A549 (cell line): ENCODE measurements at regions of chr18 and their contacts with region 1.

Region 1: GRCh38 chr18:13800505-13801259 is 23.3 kb upstream of the MC5R start:
- DNase-seq: peak; percentile 58 to 73
- ATAC-seq: peak; percentile 100
- H3K4me3 ChIP-seq: peak overlapping the region; percentile 39
- H3K27ac ChIP-seq: peak overlapping the region in 1 of 2 experiments; percentile 66; a peak in 2 of 6 replicates
- H3K4me1 ChIP-seq: peaks cover 6% of the 10 kb centered on the region; the same call in 1 of the 3 replicates
- CTCF ChIP-seq: peak; percentile 63
- EP300 ChIP-seq: no peak
- POLR2A ChIP-seq: peak; percentile 17; the same call in 1 of the 2 replicates
- RAD21 ChIP-seq: peak; percentile 54 to 80

Region 2: DNA sequence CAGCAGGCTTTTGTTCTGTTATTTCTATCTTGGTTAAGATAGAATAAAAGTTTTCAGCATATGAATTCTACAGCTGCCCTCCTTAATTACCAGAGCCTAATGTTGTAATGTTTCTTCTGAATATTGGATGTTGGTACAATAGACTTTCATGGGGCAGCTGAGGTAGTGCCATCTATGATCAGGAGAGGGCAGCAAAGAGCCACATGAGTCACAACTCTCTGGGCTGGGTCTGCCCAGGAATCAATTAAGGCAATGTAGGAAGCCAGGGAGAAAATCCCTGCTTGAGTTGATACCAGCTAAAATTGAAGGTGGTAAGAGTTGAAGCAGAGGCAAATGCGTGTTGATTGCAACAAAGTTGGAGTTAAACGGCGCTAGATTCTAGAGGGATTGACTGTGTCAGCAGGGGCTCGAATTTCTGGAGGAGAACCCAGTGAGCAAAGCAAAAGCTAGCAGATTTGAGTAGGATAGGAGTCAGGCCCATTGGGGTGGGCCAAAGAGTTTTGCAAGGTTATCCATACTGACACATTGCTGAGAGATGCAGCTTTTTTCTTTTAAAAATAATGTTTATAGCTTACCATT is 12.7 kb after region 1 on chr18:
- CTCF ChIA-PET with region 1: interaction called, 20 read pairs
- POLR2A ChIA-PET with region 1: no interaction called
- DNase-seq: peak; percentile 41 to 53
- ATAC-seq: peak; percentile 70 to 90; a peak in 3 of 6 replicates
- H3K4me3 ChIP-seq: no peak overlapping the region
- H3K27ac ChIP-seq: no peak overlapping the region
- H3K4me1 ChIP-seq: no peaks in the 10 kb centered on the region
- CTCF ChIP-seq: peak; percentile 43; the same call in 2 of the 3 replicates
- EP300 ChIP-seq: no peak
- POLR2A ChIP-seq: no peak
- RAD21 ChIP-seq: peak; percentile 51 to 57; a peak in 4 of 5 replicates

Region 3: DNA sequence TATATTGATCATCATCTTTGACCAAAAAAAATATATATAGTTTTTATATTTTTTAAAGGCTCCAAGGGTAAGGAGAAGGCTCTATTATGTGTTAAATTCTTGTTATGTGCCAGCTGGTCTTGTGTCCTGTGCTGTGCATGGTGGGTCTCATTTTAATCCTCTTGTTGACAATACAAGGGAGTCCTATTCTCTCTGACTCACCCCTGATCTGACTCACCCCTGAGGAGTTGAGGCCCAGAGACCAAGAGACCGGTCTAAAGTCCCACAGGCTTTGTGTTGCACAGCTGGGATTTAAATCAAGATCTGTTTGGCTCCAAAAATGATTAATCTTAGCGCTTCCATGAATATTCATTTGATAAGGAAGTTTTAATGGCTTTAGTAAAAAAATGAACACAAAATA is 89.0 kb after region 1 on chr18:
- CTCF ChIA-PET with region 1: no interaction called
- POLR2A ChIA-PET with region 1: interaction called, 14 read pairs
- DNase-seq: peak; percentile 4 to 7
- ATAC-seq: 0 out of 6 replicates have a peak, but pooled peaks have one; percentile 36 to 54
- H3K4me3 ChIP-seq: no peak overlapping the region
- H3K27ac ChIP-seq: no peak overlapping the region
- H3K4me1 ChIP-seq: no peaks in the 10 kb centered on the region
- CTCF ChIP-seq: no peak
- EP300 ChIP-seq: no peak
- POLR2A ChIP-seq: no peak
- RAD21 ChIP-seq: no peak